ENCODE measurements at regions of chr17 and their contacts with region 1.

Region 1: DNA sequence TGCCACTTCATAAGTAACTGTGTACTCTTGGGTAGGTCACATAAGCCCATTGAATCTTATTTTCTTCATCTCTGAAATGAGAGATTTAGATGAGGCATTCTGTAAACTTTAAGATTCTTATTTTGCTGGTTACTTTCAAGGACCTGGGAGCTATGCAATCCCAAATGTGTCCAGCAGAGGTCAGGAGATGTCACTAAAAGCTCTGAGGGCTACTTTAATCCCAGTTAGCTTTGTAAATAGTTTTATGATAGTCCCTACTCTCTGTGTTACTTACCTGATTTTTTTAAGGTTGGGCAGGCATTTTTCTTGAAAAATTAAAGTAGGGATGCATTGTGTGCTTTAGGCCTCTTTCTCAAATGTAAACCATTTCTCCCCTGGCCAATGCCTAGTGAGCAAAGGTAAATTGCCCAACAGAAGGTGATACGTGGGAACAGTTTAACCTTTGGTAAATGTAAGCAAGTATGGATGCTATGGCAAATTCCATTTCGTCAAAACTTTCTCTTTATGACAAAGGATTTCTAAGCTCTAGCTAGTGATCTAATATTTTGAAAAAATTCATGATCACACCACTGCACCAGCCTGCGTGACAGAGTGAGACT is 57.1 kb upstream of the WSB1 start:
- DNase-seq: peak; percentile 57 to 72 (median 64)
- H3K4me3 ChIP-seq: no peak overlapping the region
- H3K4me3 Mint-ChIP-seq: no peak overlapping the region
- H3K27ac ChIP-seq: no peak overlapping the region
- H3K27ac Mint-ChIP-seq: peak overlapping the region in 1 of 7 donors; percentile 41
- H3K4me1 ChIP-seq: no peaks in the 10 kb centered on the region
- H3K4me1 Mint-ChIP-seq: no peaks in the 10 kb centered on the region
- H3K27me3 ChIP-seq: no peaks in the 10 kb centered on the region
- H3K27me3 Mint-ChIP-seq: no peaks in the 10 kb centered on the region

Region 2: DNA sequence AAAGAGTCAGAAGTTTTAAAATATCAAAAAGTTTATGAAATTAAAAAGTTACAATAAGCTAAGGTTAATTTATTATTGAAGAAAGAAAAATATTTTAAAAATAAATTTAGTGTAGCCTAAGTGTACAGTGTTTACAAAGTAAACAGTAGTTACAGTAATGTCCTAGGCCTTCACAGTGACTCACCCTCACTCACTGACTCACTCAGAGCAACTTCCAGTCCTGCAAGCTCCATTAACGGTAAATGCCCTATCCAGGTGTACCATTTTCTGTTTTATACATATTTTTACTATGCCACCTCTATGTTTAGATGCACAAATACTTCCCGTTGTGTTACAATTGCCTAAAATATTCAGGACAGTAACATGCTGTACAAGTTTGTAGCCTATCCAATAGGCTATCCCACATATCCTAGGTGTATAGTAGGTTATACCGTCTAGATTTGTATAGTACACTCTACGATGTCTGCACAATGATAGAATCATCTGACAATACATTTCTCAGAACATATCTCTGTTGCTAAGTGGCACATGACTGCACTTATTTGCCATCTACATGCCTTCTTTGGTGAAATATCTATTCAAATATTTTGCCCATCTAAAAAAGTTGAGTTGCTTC is 10.1 kb before region 1 on chr17:
- CTCF ChIA-PET with region 1: interaction called, 21 read pairs
- POLR2A ChIA-PET with region 1: no interaction called
- intact Hi-C with region 1: no loop called
- DNase-seq: no peak
- H3K4me3 ChIP-seq: no peak overlapping the region
- H3K4me3 Mint-ChIP-seq: no peak overlapping the region
- H3K27ac ChIP-seq: no peak overlapping the region
- H3K27ac Mint-ChIP-seq: no peak overlapping the region
- H3K4me1 ChIP-seq: no peaks in the 10 kb centered on the region
- H3K4me1 Mint-ChIP-seq: no peaks in the 10 kb centered on the region
- H3K27me3 ChIP-seq: no peaks in the 10 kb centered on the region
- H3K27me3 Mint-ChIP-seq: no peaks in the 10 kb centered on the region

Region 3: DNA sequence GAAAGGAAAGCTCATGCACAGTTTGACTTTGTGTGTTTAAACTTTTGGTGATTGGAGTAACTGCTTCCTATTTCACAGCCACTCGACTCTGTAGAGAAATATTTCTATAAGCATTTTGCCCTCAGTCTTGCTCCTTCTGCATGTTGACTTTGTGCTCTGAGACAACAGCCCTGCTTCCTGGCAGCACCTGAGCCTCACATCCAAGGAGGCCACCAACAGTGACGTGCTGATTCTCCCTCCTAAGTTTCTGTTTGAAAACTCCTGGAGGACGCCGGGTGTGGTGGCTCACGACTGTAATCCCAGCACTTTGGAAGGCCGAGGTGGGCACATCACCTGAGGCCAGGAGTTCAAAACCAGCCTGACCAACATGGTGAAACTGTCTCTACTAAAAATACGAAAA is 33.2 kb after region 1 on chr17:
- CTCF ChIA-PET with region 1: no interaction called
- POLR2A ChIA-PET with region 1: no interaction called
- intact Hi-C with region 1: no loop called
- DNase-seq: no peak
- H3K4me3 ChIP-seq: no peak overlapping the region
- H3K4me3 Mint-ChIP-seq: no peak overlapping the region
- H3K27ac ChIP-seq: no peak overlapping the region
- H3K27ac Mint-ChIP-seq: no peak overlapping the region
- H3K4me1 ChIP-seq: no peaks in the 10 kb centered on the region
- H3K4me1 Mint-ChIP-seq: no peaks in the 10 kb centered on the region
- H3K27me3 ChIP-seq: no peaks in the 10 kb centered on the region
- H3K27me3 Mint-ChIP-seq: peaks cover 4 to 5% of the 10 kb centered on the region in 2 donors

Region 4: GRCh38 chr17:27293898-27294688 is 57.3 kb after region 1 on chr17 and contains the start of gene WSB1:
- CTCF ChIA-PET with region 1: interaction called, 26 read pairs
- POLR2A ChIA-PET with region 1: interaction called, 6 read pairs
- intact Hi-C with region 1: loop called (anchors 2 kb)
- DNase-seq: peak; percentile 91 to 94 (median 93)
- H3K4me3 ChIP-seq: peak within 1 kb of the TSS; percentile 96 to 98
- H3K4me3 Mint-ChIP-seq: peak within 1 kb of the TSS; percentile 93 to 100 (median 97)
- H3K27ac ChIP-seq: peak within 1 kb of the TSS; percentile 99
- H3K27ac Mint-ChIP-seq: peak within 1 kb of the TSS; percentile 88 to 100 (median 100)
- H3K4me1 ChIP-seq: peaks cover 46% of the 10 kb centered on the region
- H3K4me1 Mint-ChIP-seq: peaks cover 24 to 55% (median 34%) of the 10 kb centered on the region in 4 donors
- H3K27me3 ChIP-seq: no peaks in the 10 kb centered on the region
- H3K27me3 Mint-ChIP-seq: peaks cover 0 to 1% of the 10 kb centered on the region in 2 donors
- total RNA-seq, gene WSB1: 122 to 130 TPM

Region 5: GRCh38 chr17:27353461-27354050 is 116.7 kb after region 1 on chr17:
- CTCF ChIA-PET with region 1: interaction called, 37 read pairs
- POLR2A ChIA-PET with region 1: interaction called, 3 read pairs
- intact Hi-C with region 1: loop called (anchors 5 kb)
- DNase-seq: peak; percentile 82 to 88 (median 83)
- H3K4me3 ChIP-seq: peak overlapping the region; percentile 36 to 68
- H3K4me3 Mint-ChIP-seq: peak overlapping the region; percentile 68 to 89 (median 86)
- H3K27ac ChIP-seq: peak overlapping the region; percentile 80
- H3K27ac Mint-ChIP-seq: peak overlapping the region; percentile 75 to 97 (median 95)
- H3K4me1 ChIP-seq: peaks cover 16% of the 10 kb centered on the region
- H3K4me1 Mint-ChIP-seq: peaks cover 10 to 27% (median 19%) of the 10 kb centered on the region in 4 donors
- H3K27me3 ChIP-seq: no peaks in the 10 kb centered on the region
- H3K27me3 Mint-ChIP-seq: no peaks in the 10 kb centered on the region

Region 6: GRCh38 chr17:27367121-27367991 is 130.5 kb after region 1 on chr17:
- CTCF ChIA-PET with region 1: no interaction called
- POLR2A ChIA-PET with region 1: no interaction called
- intact Hi-C with region 1: no loop called
- DNase-seq: no peak
- H3K4me3 ChIP-seq: no peak overlapping the region
- H3K4me3 Mint-ChIP-seq: no peak overlapping the region
- H3K27ac ChIP-seq: no peak overlapping the region
- H3K27ac Mint-ChIP-seq: no peak overlapping the region
- H3K4me1 ChIP-seq: no peaks in the 10 kb centered on the region
- H3K4me1 Mint-ChIP-seq: no peaks in the 10 kb centered on the region
- H3K27me3 ChIP-seq: no peaks in the 10 kb centered on the region
- H3K27me3 Mint-ChIP-seq: peaks cover 0 to 1% of the 10 kb centered on the region in 2 donors

Region 7: GRCh38 chr17:27386206-27387075 is 149.6 kb after region 1 on chr17:
- CTCF ChIA-PET with region 1: interaction called, 18 read pairs
- POLR2A ChIA-PET with region 1: no interaction called
- intact Hi-C with region 1: loop called (anchors 1 kb)
- DNase-seq: no peak
- H3K4me3 ChIP-seq: no peak overlapping the region
- H3K4me3 Mint-ChIP-seq: no peak overlapping the region
- H3K27ac ChIP-seq: no peak overlapping the region
- H3K27ac Mint-ChIP-seq: peak overlapping the region in 1 of 7 donors; percentile 57
- H3K4me1 ChIP-seq: no peaks in the 10 kb centered on the region
- H3K4me1 Mint-ChIP-seq: peaks cover 0 to 4% (median 2%) of the 10 kb centered on the region in 4 donors
- H3K27me3 ChIP-seq: peaks cover under 1% of the 10 kb centered on the region
- H3K27me3 Mint-ChIP-seq: no peaks in the 10 kb centered on the region

Region 8: GRCh38 chr17:27654654-27655524 is 418.1 kb after region 1 on chr17:
- CTCF ChIA-PET with region 1: interaction called, 22 read pairs
- POLR2A ChIA-PET with region 1: no interaction called
- intact Hi-C with region 1: loop called (anchors 1 kb)
- DNase-seq: peak; percentile 39 to 57 (median 47)
- H3K4me3 ChIP-seq: no peak overlapping the region
- H3K4me3 Mint-ChIP-seq: peak overlapping the region in 1 of 8 donors; percentile 8
- H3K27ac ChIP-seq: no peak overlapping the region
- H3K27ac Mint-ChIP-seq: no peak overlapping the region
- H3K4me1 ChIP-seq: peaks cover 6% of the 10 kb centered on the region
- H3K4me1 Mint-ChIP-seq: peaks cover 0 to 12% (median 7%) of the 10 kb centered on the region in 4 donors
- H3K27me3 ChIP-seq: no peaks in the 10 kb centered on the region
- H3K27me3 Mint-ChIP-seq: peaks cover 0 to 6% of the 10 kb centered on the region in 2 donors